Prostate gland (tissue), 2 donors: ENCODE measurements at regions of chr10 and their contacts with region 1.

Region 1: GRCh38 chr10:1048732-1049424 is at the start of gene IDI1:
- DNase-seq: peak; percentile 96
- H3K4me3 ChIP-seq: peak within 1 kb of the TSS; percentile 80 to 83
- H3K27ac ChIP-seq: peak within 1 kb of the TSS; percentile 99 to 100
- H3K4me1 ChIP-seq: peaks cover 3% of the 10 kb centered on the region
- H3K27me3 ChIP-seq: no peaks in the 10 kb centered on the region
- CTCF ChIP-seq: peak in 1 of 4 experiments; percentile 20
- POLR2A ChIP-seq: peak; percentile 88
- total RNA-seq, gene IDI1: 30.9 to 36.8 TPM

Region 2: GRCh38 chr10:931416-932318 is 117.2 kb before region 1 on chr10 and contains the start of gene LARP4B:
- intact Hi-C with region 1: loop called (anchors 5 kb)
- DNase-seq: peak; percentile 96
- H3K4me3 ChIP-seq: peak within 1 kb of the TSS; percentile 80 to 82
- H3K27ac ChIP-seq: peak within 1 kb of the TSS; percentile 91 to 97
- H3K4me1 ChIP-seq: no peaks in the 10 kb centered on the region
- H3K27me3 ChIP-seq: no peaks in the 10 kb centered on the region
- CTCF ChIP-seq: peak in 1 of 4 experiments; percentile 18
- POLR2A ChIP-seq: peak; percentile 85
- total RNA-seq, gene LARP4B: 51.9 to 95.4 TPM

Region 3: DNA sequence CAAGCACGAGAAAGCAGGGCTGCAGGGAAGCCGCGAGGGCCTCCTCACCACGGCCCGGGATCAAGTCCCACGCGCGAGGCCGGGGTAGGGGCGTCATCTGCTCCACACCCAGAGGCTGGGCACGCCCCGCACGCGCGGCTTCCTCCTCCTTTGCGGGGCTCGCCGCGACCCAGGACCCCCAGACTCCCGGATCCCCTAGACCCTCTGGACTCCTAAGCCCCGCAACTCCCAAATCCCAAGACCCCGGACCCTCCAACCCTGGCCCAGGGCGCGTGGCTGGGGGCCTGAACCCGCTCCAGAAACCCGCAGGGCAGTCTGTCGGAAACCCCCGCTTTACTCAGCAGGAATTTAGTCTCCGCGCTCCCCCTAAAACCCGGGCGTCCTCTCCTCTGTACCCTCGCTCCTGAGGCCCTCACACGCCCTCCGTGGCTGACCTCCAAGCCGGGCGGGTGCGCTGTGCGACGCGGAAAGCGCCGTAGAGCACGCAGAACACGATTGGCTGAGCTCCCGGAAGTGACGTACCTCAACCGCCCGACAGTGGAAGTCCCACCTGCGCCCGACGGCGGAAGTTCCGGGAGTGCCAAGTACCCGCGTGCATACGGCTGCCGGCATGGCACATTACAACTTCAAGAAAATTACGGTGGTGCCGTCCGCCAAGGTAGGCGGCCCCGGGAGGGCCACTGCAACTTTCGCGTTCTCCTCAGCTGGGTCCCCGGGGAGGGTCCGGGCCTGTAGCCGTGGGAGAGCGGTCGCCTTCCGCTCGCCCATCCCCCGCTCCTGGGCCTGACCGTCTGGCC is 60.8 kb before region 1 on chr10 and contains the start of gene GTPBP4:
- intact Hi-C with region 1: loop called (anchors 2 kb)
- DNase-seq: peak; percentile 99
- H3K4me3 ChIP-seq: peak within 1 kb of the TSS; percentile 63 to 97
- H3K27ac ChIP-seq: peak within 1 kb of the TSS; percentile 83 to 86
- H3K4me1 ChIP-seq: peaks cover 5% of the 10 kb centered on the region
- H3K27me3 ChIP-seq: no peaks in the 10 kb centered on the region
- CTCF ChIP-seq: peak in 2 of 4 experiments; percentile 36 to 53
- POLR2A ChIP-seq: peak; percentile 52
- total RNA-seq, gene GTPBP4: 15.6 to 39.9 TPM